ENCODE measurements at regions of chr1 and their contacts with region 1.

Region 1: GRCh38 chr1:39196244-39197215 is 8.0 kb upstream of the MACF1 start:
- DNase-seq: peak; percentile 41 to 84 (median 62)
- ATAC-seq: peak; percentile 75
- H3K4me3 ChIP-seq: no peak overlapping the region
- H3K27ac ChIP-seq: peak overlapping the region; percentile 72
- H3K4me1 ChIP-seq: peaks cover 22 to 40% of the 10 kb centered on the region in 2 experiments
- H3K27me3 ChIP-seq: no peaks in the 10 kb centered on the region
- CTCF ChIP-seq: no peak
- EP300 ChIP-seq: peak; percentile 81; the same call in 1 of the 2 replicates
- POLR2A ChIP-seq: no peak
- RAD21 ChIP-seq: 0 out of 4 replicates have a peak, but pooled peaks have one; percentile 6 to 28

Region 2: GRCh38 chr1:38708701-38709258 is 487.8 kb before region 1 on chr1:
- CTCF ChIA-PET with region 1: no interaction called
- POLR2A ChIA-PET with region 1: no interaction called
- in situ Hi-C with region 1: no loop called
- intact Hi-C with region 1: no loop called
- DNase-seq: no peak
- ATAC-seq: no peak
- H3K4me3 ChIP-seq: no peak overlapping the region
- H3K27ac ChIP-seq: no peak overlapping the region
- H3K4me1 ChIP-seq: peaks cover 0 to 6% of the 10 kb centered on the region in 2 experiments; a peak in 1 of 5 replicates
- H3K27me3 ChIP-seq: peaks cover 0 to 7% of the 10 kb centered on the region in 2 experiments; a peak in 2 of 5 replicates
- CTCF ChIP-seq: no peak
- EP300 ChIP-seq: no peak
- POLR2A ChIP-seq: no peak
- RAD21 ChIP-seq: no peak

Region 3: GRCh38 chr1:39214998-39215873 is 18.7 kb after region 1 on chr1:
- CTCF ChIA-PET with region 1: no interaction called
- POLR2A ChIA-PET with region 1: interaction called, 17 read pairs
- in situ Hi-C with region 1: no loop called
- intact Hi-C with region 1: no loop called
- DNase-seq: peak; percentile 59 to 81 (median 64)
- ATAC-seq: peak; percentile 77
- H3K4me3 ChIP-seq: peak overlapping the region; percentile 36
- H3K27ac ChIP-seq: peak overlapping the region; percentile 79
- H3K4me1 ChIP-seq: peaks cover 23 to 57% of the 10 kb centered on the region in 2 experiments
- H3K27me3 ChIP-seq: no peaks in the 10 kb centered on the region; a peak in 1 of 5 replicates
- CTCF ChIP-seq: no peak
- EP300 ChIP-seq: no peak
- POLR2A ChIP-seq: peak; percentile 64
- RAD21 ChIP-seq: no peak

Region 4: DNA sequence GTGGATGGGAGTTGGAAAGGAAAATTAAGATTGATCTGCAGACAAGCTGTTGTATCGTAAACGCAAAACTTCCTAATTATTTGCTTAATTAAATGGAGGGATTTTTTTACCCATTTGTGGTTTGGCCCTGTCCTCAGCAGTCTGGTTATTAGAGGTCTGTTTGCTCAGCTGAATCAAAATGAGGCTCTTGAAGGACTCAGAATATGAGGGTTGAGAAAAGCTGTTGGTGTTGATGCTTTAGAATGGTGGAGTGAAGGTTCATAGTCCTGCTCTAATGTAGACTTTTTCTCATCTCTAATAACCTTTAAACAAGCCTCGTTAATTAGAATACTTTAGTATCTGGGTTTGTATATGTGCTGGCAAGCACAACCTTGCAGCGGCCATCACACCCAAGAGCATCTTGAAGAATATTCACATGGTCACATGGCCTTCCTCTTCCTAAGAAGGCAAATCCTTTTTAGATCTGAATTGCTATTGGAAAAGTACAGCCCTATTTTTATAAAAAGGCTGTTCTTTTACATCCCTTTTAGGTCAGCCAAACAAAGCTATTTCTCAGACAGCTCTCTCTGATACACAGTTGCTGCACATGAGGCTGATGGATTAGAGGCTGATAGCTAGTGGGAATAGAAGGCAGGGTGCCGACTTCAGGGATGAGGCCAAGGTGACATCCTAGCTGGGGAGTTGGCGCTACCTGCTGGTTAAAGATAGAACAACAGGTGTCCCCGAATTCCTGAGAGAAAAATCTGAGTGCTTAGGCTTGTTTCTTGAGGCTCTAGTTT is 61.8 kb after region 1 on chr1:
- CTCF ChIA-PET with region 1: interaction called, 39 read pairs
- POLR2A ChIA-PET with region 1: interaction called, 5 read pairs
- in situ Hi-C with region 1: no loop called
- intact Hi-C with region 1: loop called (anchors 1 kb)
- DNase-seq: peak; percentile 78 to 85 (median 82)
- ATAC-seq: peak; percentile 92
- H3K4me3 ChIP-seq: no peak overlapping the region
- H3K27ac ChIP-seq: no peak overlapping the region
- H3K4me1 ChIP-seq: no peaks in the 10 kb centered on the region
- H3K27me3 ChIP-seq: no peaks in the 10 kb centered on the region
- CTCF ChIP-seq: peak; percentile 89 to 97 (median 95)
- EP300 ChIP-seq: no peak
- POLR2A ChIP-seq: no peak
- RAD21 ChIP-seq: peak; percentile 97 to 99